Astrocyte of the cerebellum (primary cell): ENCODE measurements at regions of chr11 and their contacts with region 1.

Region 1: GRCh38 chr11:14318581-14318981 is 40.4 kb downstream of the RRAS2 start:
- DNase-seq: no peak
- H3K4me3 ChIP-seq: no peak overlapping the region
- CTCF ChIP-seq: no peak

Region 2: DNA sequence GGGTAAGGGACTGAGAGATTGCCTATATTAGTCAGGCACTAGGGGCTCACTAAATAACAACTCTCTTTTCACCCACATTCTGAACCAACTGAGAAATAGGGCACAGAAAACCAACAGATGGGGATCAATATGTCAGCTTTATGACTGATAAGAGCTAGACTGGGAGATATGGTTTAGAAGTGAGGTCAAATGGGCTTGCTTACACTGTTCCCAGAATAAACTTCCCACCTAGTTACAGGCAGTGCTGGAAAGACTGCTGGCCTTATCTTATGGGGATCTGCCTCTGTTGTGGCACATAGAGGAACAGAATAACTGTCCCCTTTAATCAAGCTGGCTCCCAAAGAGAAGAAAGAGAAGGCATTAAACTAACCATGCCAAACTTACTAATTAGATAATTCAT is 51.0 kb after region 1 on chr11:
- in situ Hi-C with region 1: loop called (anchors 5 kb)
- DNase-seq: no peak
- H3K4me3 ChIP-seq: no peak overlapping the region
- CTCF ChIP-seq: no peak

Region 3: DNA sequence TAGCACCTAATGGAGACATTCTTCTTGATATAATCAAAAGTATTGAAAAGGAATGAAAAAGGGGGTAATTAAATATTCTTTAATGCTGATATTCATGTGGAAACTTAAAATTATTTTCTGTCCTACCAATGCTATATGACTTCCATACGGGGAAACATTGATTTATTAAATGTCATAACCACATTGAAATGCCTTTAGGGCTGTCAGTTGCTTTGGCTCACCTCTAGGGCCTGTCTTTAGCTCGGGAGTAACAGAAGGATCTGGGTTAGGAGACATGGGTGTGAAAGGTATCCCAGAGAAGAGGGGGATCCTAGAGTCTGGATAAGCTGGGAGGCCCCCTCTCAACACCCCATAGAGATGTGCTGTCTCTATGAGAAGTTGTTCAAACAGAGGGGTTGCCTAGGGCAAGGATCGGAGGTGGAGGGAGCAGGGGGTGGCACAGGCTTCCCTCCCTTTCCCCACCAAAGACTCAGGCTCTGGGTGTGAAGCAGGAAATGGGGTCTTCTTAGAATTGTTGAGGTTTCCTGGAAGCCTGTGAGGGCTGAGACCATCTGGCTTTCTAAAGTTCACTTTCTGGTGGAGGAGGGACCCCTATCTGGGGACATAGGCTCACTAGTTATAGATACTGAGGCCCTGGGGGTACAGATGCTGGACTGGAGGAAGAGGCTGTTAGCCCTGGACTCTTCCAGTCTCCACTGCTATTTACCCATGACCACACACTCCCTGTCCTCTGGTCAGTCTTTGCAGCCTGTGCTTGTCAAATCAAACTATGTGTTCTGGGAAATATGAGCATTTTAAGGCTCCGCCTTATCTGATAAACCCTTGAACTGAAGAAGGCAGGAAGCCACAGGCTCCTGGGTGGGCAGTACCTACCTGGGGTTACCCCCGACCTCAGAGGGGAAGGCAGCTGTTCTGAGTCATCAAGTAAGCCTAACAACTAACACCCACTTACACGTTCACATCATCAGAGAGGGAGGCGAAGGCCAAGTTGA is 96.2 kb after region 1 on chr11:
- in situ Hi-C with region 1: loop called (anchors 5 kb)
- DNase-seq: no peak
- H3K4me3 ChIP-seq: no peak overlapping the region
- CTCF ChIP-seq: peak; percentile 5